ENCODE measurements at regions of chr18 and their contacts with region 1.

Region 1: GRCh38 chr18:46660955-46661749 is 4.1 kb upstream of the LOXHD1 start:
- DNase-seq: peak; percentile 19
- H3K4me3 ChIP-seq: no peak overlapping the region
- H3K27ac ChIP-seq: no peak overlapping the region
- H3K4me1 ChIP-seq: no peaks in the 10 kb centered on the region
- H3K27me3 ChIP-seq: peaks cover 0 to 3% of the 10 kb centered on the region in 2 experiments
- CTCF ChIP-seq: no peak
- POLR2A ChIP-seq: no peak

Region 2: GRCh38 chr18:45938488-45938935 is 722.6 kb before region 1 on chr18:
- CTCF ChIA-PET with region 1: no interaction called
- POLR2A ChIA-PET with region 1: no interaction called
- dilution Hi-C with region 1: no loop called
- intact Hi-C with region 1: no loop called
- DNase-seq: no peak
- H3K4me3 ChIP-seq: no peak overlapping the region
- H3K27ac ChIP-seq: no peak overlapping the region
- H3K4me1 ChIP-seq: no peaks in the 10 kb centered on the region
- H3K27me3 ChIP-seq: no peaks in the 10 kb centered on the region
- CTCF ChIP-seq: no peak
- POLR2A ChIP-seq: no peak

Region 3: GRCh38 chr18:46148810-46149209 is 512.3 kb before region 1 on chr18:
- CTCF ChIA-PET with region 1: interaction called, 199 read pairs
- POLR2A ChIA-PET with region 1: no interaction called
- dilution Hi-C with region 1: no loop called
- intact Hi-C with region 1: loop called (anchors 1 kb)
- DNase-seq: peak; percentile 66
- H3K4me3 ChIP-seq: no peak overlapping the region
- H3K27ac ChIP-seq: no peak overlapping the region
- H3K4me1 ChIP-seq: no peaks in the 10 kb centered on the region
- H3K27me3 ChIP-seq: no peaks in the 10 kb centered on the region
- CTCF ChIP-seq: peak; percentile 52 to 59
- POLR2A ChIP-seq: no peak

Region 4: DNA sequence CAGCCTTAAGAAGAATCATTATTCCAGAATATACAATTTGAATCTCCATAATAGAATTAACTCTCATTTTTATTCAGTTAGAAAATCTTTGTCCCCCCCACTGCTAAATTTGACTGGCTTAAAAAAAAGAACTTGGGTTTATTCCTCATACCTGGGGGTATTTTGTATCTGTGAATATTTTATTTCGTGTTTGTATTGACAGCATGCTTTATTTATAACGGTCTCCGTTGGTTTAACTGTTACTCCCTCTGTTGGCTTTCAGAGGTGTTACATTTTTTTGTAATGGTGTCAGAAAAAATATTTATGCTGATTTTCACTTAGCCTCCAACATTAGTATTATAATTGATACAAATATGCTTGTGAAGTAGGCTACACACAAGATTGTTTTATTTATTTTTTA is 447.9 kb before region 1 on chr18:
- CTCF ChIA-PET with region 1: interaction called, 11 read pairs
- POLR2A ChIA-PET with region 1: no interaction called
- dilution Hi-C with region 1: no loop called
- intact Hi-C with region 1: no loop called
- DNase-seq: peak; percentile 32
- H3K4me3 ChIP-seq: no peak overlapping the region
- H3K27ac ChIP-seq: no peak overlapping the region
- H3K4me1 ChIP-seq: peaks cover 12% of the 10 kb centered on the region
- H3K27me3 ChIP-seq: no peaks in the 10 kb centered on the region
- CTCF ChIP-seq: peak in 1 of 2 donors; percentile 32
- POLR2A ChIP-seq: no peak

Region 5: DNA sequence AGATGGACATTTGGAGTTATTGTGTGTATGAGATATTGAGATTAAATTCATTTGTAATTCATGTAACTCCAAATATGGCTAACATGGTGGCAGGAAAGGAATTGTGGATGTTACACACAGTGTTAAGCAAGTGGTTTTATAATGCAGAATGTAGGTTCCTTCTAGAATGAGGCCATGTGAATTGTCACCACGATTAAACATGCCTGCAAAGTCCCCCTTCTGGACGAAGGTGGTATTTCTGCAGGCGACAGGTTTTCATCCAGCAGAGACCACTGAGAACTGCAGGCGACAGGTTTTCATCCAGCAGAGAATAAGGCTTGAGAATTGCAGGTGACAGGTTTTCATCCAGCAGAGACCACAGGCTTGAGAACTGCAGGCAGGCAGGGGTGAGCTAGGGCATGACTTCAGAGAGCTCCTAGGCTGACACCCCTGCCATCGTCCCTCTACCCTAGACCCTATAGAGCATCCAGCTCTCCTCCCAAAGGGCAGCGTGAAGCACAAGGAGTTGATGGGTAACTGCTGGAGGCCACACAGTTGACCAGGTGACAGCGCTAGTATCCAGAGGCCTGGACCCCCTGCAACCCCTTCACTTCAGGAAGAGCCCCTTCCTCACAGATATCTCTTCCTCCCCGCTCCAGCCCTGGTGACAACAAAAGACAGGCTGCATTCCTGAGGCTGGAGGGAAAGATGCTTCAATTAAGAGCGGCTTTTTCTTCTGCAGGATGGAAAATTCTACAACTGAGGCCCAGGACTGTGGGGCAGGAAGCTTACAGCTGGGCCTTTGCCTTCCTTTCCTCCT is 179.9 kb before region 1 on chr18:
- CTCF ChIA-PET with region 1: interaction called, 5 read pairs
- POLR2A ChIA-PET with region 1: no interaction called
- dilution Hi-C with region 1: no loop called
- intact Hi-C with region 1: loop called (anchors 1 kb)
- DNase-seq: peak; percentile 37
- H3K4me3 ChIP-seq: no peak overlapping the region
- H3K27ac ChIP-seq: no peak overlapping the region
- H3K4me1 ChIP-seq: no peaks in the 10 kb centered on the region
- H3K27me3 ChIP-seq: no peaks in the 10 kb centered on the region
- CTCF ChIP-seq: peak; percentile 57 to 61
- POLR2A ChIP-seq: no peak

Region 6: GRCh38 chr18:46528037-46528436 is 133.1 kb before region 1 on chr18:
- CTCF ChIA-PET with region 1: no interaction called
- POLR2A ChIA-PET with region 1: no interaction called
- dilution Hi-C with region 1: no loop called
- intact Hi-C with region 1: no loop called
- DNase-seq: no peak
- H3K4me3 ChIP-seq: no peak overlapping the region
- H3K27ac ChIP-seq: no peak overlapping the region
- H3K4me1 ChIP-seq: no peaks in the 10 kb centered on the region
- H3K27me3 ChIP-seq: no peaks in the 10 kb centered on the region
- CTCF ChIP-seq: no peak
- POLR2A ChIP-seq: no peak

Region 7: DNA sequence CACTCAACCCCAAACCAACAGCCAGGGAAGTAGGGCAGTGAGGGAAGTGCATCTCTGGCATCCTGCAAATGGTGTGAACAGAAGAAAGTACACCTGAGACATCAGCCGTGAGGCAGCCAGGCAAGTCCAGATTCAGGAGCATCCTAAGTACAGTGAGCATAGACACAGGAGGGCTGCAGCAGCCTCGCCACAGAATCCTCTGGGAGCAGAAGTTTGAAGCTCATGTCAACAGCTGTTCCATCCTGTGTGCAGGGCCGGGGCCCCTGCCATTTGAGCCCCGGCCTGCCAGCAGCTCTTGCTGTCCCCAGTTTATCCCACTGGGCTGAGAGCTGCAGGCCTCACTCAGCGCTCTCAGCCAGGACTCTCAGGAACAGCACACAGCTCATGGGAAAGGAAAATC is 18.6 kb before region 1 on chr18:
- CTCF ChIA-PET with region 1: interaction called, 16 read pairs
- POLR2A ChIA-PET with region 1: no interaction called
- dilution Hi-C with region 1: no loop called
- intact Hi-C with region 1: no loop called
- DNase-seq: no peak
- H3K4me3 ChIP-seq: no peak overlapping the region
- H3K27ac ChIP-seq: no peak overlapping the region
- H3K4me1 ChIP-seq: no peaks in the 10 kb centered on the region
- H3K27me3 ChIP-seq: no peaks in the 10 kb centered on the region
- CTCF ChIP-seq: no peak
- POLR2A ChIP-seq: no peak

Region 8: DNA sequence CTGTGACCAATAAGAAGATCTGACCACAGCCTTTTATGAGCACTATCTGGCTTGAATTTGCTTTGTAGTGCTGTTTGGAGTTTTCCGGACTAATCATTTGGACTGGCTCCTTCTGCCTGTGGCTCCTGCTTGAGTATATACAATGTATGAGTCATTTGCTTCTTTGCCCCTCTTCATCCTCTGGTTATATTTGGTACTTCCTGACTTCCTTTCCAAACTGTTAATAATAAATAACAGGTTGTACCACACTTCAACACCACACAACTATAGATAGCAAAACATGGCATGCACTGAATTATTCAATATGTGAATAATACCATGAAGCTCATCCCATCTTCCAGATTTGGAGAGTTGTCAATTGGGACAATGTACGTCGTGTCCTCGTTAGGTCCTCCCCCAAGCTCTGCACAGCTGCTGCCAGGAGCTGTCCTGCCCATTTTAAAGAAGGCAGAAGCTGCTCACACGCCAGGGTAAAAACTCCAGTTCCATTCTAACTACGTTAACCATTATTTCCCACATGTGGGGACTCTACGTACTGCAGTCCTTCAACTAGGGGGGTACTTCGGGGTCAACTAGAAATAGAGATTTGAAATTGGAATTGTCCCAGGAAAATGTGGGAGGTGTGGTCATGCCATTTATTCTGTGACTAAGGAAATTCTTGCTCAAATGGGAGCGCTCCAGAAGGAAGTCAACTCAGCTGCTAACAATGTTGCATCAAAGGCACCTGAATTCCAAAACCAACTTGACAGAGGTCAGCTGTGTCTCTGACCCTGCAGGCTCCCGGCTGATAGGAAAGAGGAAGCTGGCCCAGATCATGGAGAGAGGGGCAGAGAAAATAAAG is 57.6 kb after region 1 on chr18:
- CTCF ChIA-PET with region 1: interaction called, 5 read pairs
- POLR2A ChIA-PET with region 1: no interaction called
- dilution Hi-C with region 1: no loop called
- intact Hi-C with region 1: loop called (anchors 1 kb)
- DNase-seq: peak; percentile 89
- H3K4me3 ChIP-seq: peak overlapping the region in 1 of 3 experiments; percentile 28
- H3K27ac ChIP-seq: peak overlapping the region; percentile 54
- H3K4me1 ChIP-seq: peaks cover 18% of the 10 kb centered on the region
- H3K27me3 ChIP-seq: peaks cover 3 to 5% of the 10 kb centered on the region in 2 experiments
- CTCF ChIP-seq: no peak
- POLR2A ChIP-seq: no peak

Measured in endothelial cell of umbilical vein (primary cell).